Colonic mucosa (tissue), 4 donors: ENCODE measurements at regions of chr10 and their contacts with region 1.

Region 1: GRCh38 chr10:50648089-50648934 is 24.6 kb upstream of the SGMS1 start:
- DNase-seq: no peak
- H3K4me3 ChIP-seq: no peak overlapping the region
- H3K27ac ChIP-seq: no peak overlapping the region
- H3K4me1 ChIP-seq: no peaks in the 10 kb centered on the region
- H3K27me3 ChIP-seq: no peaks in the 10 kb centered on the region
- CTCF ChIP-seq: no peak

Region 2: DNA sequence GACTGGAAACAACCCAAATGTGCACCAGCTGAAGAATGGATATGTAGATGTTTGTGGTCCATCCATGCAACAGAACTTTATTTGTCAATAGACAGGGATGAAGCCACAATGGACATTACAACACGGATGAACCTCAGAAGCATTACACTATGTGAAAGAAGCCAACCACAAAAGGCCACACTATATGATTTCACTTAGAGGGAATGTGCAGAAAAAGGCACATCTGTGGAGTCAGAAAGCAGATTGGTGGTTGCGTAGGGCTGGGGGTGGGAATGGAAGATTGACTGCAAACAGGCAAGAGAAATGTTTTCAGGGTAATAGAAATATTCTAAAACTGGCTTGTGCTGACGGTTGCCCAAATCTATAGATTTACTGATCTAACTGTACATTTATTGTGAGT is 614.8 kb before region 1 on chr10:
- intact Hi-C with region 1: loop called (anchors 10 kb)
- DNase-seq: no peak
- H3K4me3 ChIP-seq: no peak overlapping the region
- H3K27ac ChIP-seq: no peak overlapping the region
- H3K4me1 ChIP-seq: no peaks in the 10 kb centered on the region
- H3K27me3 ChIP-seq: no peaks in the 10 kb centered on the region
- CTCF ChIP-seq: no peak